Dorsolateral prefrontal cortex (tissue), 120 donors: ENCODE measurements at regions of chr13 and their contacts with region 1.

Region 1: DNA sequence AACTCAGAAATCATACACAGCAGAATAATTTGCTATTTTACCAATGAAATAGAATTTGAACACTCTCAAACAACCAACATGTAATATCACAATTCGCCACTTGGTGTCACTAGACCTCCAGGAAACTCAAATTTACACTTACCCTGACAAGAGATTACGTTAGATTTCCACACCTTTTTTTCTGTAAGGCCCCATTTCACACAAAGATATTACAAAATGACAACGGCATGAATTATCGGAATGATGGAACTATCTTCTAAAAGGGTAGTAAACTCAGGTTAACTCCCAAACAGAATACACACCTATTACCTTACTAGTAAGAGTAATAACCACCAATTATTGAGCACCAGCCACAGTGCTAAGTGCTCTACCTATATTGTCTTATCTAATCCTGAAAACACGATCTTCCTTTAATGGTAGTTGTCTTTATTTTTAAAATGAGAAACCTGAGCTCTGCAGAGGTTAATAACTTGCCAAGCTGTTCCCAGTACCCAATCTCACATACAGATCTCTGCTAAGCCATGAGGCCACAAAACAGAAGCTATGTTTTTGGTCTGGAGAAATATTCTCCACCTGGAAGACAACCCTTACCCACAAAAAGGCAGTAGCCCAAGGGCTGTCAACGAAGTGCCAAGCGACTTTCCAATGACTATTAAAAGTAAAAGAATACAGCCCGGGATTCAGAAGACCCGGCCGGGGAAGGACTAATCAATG is 152.4 kb downstream of the DCLK1 start:
- DNase-seq: peak in 2 of 10 donors; percentile 11 to 38
- H3K4me3 ChIP-seq: peak overlapping the region in 9 of 59 donors; percentile 0 to 31 (median 9)
- H3K27ac ChIP-seq: peak overlapping the region in 54 of 59 donors; percentile 19 to 90 (median 69)
- H3K27me3 ChIP-seq: peaks cover 0 to 4% (median 0%) of the 10 kb centered on the region in 45 donors
- CTCF ChIP-seq: peak; percentile 73 to 95 (median 87)

Region 2: DNA sequence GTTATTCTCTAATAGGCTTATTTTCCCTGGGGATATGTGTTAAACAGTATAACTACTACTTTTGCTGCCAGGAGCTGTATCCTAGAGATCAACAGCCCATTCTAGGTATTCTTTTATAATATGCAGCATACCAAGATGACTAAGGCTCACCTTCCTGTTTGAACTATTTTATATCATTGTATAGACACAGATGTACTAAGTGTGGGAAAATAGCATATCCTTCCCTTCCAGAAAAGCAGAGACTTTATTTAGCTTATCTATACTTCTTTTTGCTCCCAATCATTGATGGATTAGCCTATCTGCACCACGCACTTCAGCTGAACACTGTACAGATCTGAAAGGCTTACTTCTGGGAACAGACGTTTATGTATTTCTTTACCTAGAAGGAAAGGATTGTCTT is 584.9 kb before region 1 on chr13:
- intact Hi-C with region 1: no loop called
- DNase-seq: no peak
- H3K4me3 ChIP-seq: no peak overlapping the region
- H3K27ac ChIP-seq: no peak overlapping the region
- H3K27me3 ChIP-seq: no peaks in the 10 kb centered on the region
- CTCF ChIP-seq: no peak

Region 3: GRCh38 chr13:36038785-36039555 is 60.2 kb after region 1 on chr13:
- intact Hi-C with region 1: loop called in 1 of 2 experiments (anchors 2 kb)
- DNase-seq: no peak
- H3K4me3 ChIP-seq: no peak overlapping the region
- H3K27ac ChIP-seq: peak overlapping the region in 39 of 59 donors; percentile 3 to 77 (median 53)
- H3K27me3 ChIP-seq: no peaks in the 10 kb centered on the region
- CTCF ChIP-seq: no peak

Region 4: DNA sequence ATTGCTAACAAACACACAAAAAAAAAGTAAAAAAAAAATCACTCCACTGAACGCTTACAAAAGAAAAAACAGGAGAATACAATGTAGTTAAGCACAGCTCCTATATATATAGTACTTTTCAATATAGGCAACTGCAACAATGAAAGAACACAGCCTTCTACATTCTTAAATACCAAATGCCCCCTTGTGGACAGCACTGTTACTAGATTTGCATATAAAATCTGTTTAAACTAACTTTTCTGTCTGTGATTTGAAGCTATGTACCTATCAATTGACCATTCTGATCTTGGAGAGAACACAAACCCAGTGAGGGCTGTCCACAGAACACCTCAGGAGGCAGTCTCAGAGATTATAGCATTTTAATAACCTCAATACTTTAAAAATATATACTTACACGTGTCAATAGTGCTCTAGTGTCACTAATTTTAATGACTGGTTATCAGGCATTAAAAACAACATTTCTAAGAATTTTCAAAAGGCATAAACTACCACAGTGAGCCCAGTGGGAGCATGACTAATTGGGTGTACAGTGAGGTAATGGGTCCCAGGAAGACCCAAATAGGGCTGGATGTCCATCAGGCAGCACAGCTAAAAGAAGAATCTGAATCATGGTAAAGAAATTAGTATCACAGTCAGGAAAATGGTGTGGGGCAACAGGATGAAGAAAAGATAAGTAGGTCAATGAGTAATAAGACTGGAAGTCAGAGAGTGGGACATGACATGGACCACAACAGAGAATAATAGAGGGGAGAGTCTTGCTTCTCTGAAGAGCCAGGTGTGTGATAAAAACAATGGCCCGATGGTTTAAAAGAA is 296.6 kb after region 1 on chr13:
- intact Hi-C with region 1: loop called (anchors 2 to 5 kb)
- DNase-seq: peak in 1 of 10 donors; percentile 21
- H3K4me3 ChIP-seq: peak overlapping the region in 4 of 59 donors; percentile 2 to 33 (median 19)
- H3K27ac ChIP-seq: no peak overlapping the region
- H3K27me3 ChIP-seq: no peaks in the 10 kb centered on the region
- CTCF ChIP-seq: peak; percentile 40 to 77 (median 65)